BJ (cell line): ENCODE measurements at regions of chr12 and their contacts with region 1.

Region 1: GRCh38 chr12:56668197-56668457 is 20.0 kb downstream of the PTGES3 start:
- DNase-seq: no peak
- H3K4me3 ChIP-seq: no peak overlapping the region
- H3K27me3 ChIP-seq: no peaks in the 10 kb centered on the region
- CTCF ChIP-seq: no peak

Region 2: DNA sequence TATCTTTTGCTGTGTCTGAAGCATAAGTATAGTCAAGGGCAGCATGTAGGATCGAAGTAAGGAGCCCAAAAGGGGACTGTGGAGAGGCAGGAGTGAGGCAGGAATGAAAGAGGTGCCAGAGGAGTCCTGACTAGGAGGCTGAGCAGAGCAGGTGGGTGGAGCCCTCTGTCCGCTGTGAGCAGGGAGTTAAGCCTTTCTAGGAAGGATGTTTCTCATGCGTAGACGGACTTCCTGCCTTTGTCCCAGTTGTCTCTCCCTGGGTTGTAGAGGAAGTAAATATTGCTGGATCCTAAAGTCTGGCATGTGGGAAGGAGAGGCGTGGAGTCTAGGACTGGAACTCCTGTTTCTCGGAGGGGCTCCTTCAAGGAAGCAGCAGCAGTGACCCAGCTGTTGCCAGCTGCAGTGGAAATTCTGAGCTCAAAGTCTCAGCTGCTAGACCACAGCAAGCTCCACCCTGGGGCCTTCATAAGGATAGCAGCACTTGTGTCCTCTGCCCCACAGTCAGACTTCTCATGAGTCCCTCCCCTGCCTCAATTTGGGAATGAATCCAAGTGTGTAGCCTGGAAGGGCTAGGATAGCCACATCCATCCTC is 102.5 kb before region 1 on chr12:
- CTCF ChIA-PET with region 1: no interaction called
- POLR2A ChIA-PET with region 1: no interaction called
- DNase-seq: peak; percentile 45
- H3K4me3 ChIP-seq: no peak overlapping the region
- H3K27me3 ChIP-seq: no peaks in the 10 kb centered on the region
- CTCF ChIP-seq: peak; percentile 5; the same call in 1 of the 2 replicates

Region 3: DNA sequence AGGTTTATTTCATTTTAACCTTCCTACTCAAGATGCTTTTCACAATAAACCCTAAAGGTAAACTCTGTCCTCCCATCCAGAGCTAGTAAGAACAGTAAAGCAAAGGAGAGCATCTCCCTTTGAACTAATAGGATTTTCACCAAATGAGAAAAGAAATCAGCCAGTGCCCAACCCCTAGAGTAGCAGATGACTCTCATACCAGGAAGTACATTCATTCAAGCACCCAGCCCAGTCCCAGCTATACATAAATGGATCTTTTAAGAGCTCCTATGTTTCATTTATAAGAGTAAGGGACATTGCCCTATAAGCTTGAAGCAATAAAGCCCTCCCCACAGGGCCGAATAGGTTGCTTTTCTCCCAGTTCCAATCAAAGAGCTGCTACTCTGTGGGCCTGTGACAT is 45.6 kb before region 1 on chr12:
- CTCF ChIA-PET with region 1: no interaction called
- POLR2A ChIA-PET with region 1: no interaction called
- DNase-seq: no peak
- H3K4me3 ChIP-seq: no peak overlapping the region
- H3K27me3 ChIP-seq: no peaks in the 10 kb centered on the region
- CTCF ChIP-seq: no peak

Region 4: GRCh38 chr12:56657416-56658379 is 10.4 kb before region 1 on chr12:
- CTCF ChIA-PET with region 1: no interaction called
- POLR2A ChIA-PET with region 1: no interaction called
- DNase-seq: no peak
- H3K4me3 ChIP-seq: no peak overlapping the region
- H3K27me3 ChIP-seq: no peaks in the 10 kb centered on the region
- CTCF ChIP-seq: no peak

Region 5: GRCh38 chr12:56724972-56725722 is 57.0 kb after region 1 on chr12 and contains the start of gene NACA:
- CTCF ChIA-PET with region 1: no interaction called
- POLR2A ChIA-PET with region 1: interaction called, 16 read pairs
- DNase-seq: peak; percentile 95
- H3K4me3 ChIP-seq: peak within 1 kb of the TSS; percentile 99
- H3K27me3 ChIP-seq: no peaks in the 10 kb centered on the region
- CTCF ChIP-seq: no peak
- polyA plus RNA-seq, gene NACA: 678 and 921 TPM in 2 replicates